ENCODE measurements at regions of chr11 and their contacts with region 1.

Region 1: DNA sequence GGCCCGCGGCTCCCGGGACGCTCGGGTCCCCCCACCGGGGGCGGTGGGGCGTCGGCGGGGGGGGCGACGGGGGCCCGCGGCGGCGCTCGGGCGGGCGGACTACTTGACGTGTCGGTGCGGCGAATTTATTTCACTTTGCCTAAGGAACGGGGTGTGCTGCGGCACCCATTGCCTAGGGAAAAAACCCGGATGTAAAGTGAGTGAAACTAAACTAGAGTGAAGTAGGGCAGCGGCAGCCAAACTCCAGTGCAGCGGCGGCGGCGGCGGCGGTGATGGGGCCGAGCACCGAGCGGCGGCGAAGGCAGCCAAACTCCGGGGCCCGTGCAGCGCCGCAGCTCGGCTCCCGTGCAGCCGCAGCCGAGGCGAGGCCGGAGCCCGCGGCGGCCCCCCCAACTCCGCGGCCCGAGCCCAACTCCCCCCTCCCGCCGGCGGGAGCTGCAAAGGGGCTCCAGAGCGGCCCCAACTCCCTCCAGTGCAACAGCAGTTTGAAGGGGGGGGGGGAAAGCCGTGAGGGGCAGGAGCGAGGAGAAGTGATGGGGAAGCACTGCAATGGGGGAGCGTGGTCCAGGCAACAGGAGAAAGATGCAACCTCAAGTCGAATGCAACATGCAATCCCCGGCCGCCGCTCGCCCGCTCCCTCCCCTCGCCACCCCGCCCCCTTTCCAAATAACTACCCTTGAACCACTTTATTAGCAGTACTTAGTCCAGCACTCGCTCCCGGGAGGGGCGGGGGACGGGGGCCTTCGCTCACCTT is 647 bp upstream of the PHF21A start:
- DNase-seq: peak; percentile 76
- H3K4me3 Mint-ChIP-seq: peak overlapping the region; percentile 86
- H3K27ac Mint-ChIP-seq: peak overlapping the region; percentile 91
- H3K4me1 Mint-ChIP-seq: peaks cover 40% of the 10 kb centered on the region
- H3K27me3 Mint-ChIP-seq: no peaks in the 10 kb centered on the region

Region 2: DNA sequence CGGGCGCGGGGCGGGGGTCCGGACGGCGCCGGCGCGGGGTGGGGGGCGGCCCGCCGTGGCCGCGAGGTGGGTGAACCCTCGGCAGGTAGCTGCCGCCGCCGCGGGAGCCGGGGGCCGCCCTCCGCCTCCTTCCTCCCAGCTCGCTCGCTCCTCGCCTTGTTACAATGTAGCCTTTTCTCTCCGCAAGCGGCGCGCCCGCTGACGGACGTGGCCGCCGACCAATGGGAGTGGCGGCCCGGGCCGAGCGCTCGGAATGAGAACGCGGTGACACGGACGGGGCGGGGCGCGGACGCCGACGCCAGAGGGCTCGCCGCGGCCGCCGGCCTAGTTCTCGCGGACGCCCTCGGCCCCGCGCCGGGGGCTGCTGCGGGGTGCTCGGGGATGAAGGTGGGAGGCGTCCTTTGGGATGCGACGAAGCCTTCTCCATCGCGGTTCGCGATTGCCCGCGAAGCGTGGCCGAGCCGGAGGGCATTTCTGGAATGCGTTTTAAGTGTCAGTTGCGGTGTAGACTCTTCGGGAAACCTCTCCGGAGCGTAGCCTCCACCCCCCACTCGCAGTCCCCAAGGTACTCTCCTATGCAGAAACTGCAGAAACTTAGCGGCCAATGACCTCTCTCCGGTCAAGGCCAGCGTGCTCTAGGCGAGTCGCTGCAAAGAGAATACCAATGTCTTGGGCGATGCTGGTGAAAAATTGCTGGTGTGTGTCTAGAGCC is 974.7 kb before region 1 on chr11:
- intact Hi-C with region 1: loop called (anchors 10 kb)
- DNase-seq: peak; percentile 91
- H3K4me3 Mint-ChIP-seq: peak overlapping the region; percentile 81
- H3K27ac Mint-ChIP-seq: peak overlapping the region; percentile 83
- H3K4me1 Mint-ChIP-seq: peaks cover 13% of the 10 kb centered on the region
- H3K27me3 Mint-ChIP-seq: peaks cover 35% of the 10 kb centered on the region

Region 3: GRCh38 chr11:45713573-45713972 is 408.3 kb before region 1 on chr11:
- intact Hi-C with region 1: no loop called
- DNase-seq: no peak
- H3K4me3 Mint-ChIP-seq: no peak overlapping the region
- H3K27ac Mint-ChIP-seq: no peak overlapping the region
- H3K4me1 Mint-ChIP-seq: no peaks in the 10 kb centered on the region
- H3K27me3 Mint-ChIP-seq: peaks cover 14% of the 10 kb centered on the region

Region 4: DNA sequence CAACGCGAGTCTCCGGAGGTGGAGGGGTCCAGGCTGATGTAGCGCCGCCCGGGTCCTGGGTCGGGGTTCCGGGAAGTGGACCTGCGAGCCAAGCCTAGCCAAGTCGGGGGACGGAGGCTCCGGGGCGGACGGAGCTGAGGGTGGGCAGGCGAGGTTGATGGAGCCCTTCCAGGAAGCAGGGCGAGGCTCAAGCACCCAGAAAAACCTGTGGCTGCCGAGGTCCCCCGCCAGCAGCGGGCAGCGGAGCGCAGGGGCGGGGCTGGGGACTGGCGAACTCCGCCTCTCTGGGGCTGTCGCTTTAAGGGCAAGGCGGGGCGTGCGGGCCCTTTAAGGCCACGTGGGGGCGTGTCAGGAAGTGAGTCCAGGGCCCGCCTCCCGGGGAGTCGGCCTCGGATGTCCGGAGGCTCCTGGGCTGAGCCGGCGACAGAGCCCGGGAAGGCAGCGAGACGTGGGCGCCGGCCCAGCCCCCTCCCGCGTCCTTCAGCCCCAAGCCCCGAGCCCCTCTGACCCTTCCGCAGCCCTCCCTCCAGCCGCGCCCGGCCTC is 317.1 kb before region 1 on chr11 and contains the start of gene SLC35C1:
- intact Hi-C with region 1: loop called (anchors 10 kb)
- DNase-seq: peak; percentile 96
- H3K4me3 Mint-ChIP-seq: peak within 1 kb of the TSS; percentile 97
- H3K27ac Mint-ChIP-seq: peak within 1 kb of the TSS; percentile 92
- H3K4me1 Mint-ChIP-seq: peaks cover 38% of the 10 kb centered on the region
- H3K27me3 Mint-ChIP-seq: no peaks in the 10 kb centered on the region
- total RNA-seq, gene SLC35C1: 16.3 and 18.2 TPM in 2 replicates

Region 5: DNA sequence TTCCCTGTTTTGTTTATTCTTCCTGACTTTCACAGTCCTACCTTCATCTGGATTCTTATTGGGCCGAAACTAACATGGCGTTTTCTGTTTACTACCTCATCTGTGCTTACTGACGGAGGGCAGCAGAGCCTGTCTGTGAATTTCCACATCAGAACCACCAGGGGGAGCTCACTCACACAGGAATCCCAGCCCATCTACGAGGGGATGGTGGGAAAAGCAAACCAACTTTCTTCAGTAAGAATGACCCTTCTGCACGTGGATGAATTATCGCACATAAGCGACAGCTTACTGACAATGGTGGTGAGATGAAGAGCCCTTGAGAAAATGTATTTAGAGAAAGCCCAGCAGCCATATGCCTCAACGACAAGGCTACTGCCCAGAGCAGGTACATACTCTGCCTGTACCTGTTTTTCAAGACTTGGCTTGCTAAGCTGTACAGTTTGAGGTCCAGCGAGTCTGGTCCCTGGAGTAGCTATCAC is 157.0 kb before region 1 on chr11:
- intact Hi-C with region 1: loop called (anchors 5 kb)
- DNase-seq: peak; percentile 38
- H3K4me3 Mint-ChIP-seq: no peak overlapping the region
- H3K27ac Mint-ChIP-seq: no peak overlapping the region
- H3K4me1 Mint-ChIP-seq: no peaks in the 10 kb centered on the region
- H3K27me3 Mint-ChIP-seq: no peaks in the 10 kb centered on the region

Region 6: DNA sequence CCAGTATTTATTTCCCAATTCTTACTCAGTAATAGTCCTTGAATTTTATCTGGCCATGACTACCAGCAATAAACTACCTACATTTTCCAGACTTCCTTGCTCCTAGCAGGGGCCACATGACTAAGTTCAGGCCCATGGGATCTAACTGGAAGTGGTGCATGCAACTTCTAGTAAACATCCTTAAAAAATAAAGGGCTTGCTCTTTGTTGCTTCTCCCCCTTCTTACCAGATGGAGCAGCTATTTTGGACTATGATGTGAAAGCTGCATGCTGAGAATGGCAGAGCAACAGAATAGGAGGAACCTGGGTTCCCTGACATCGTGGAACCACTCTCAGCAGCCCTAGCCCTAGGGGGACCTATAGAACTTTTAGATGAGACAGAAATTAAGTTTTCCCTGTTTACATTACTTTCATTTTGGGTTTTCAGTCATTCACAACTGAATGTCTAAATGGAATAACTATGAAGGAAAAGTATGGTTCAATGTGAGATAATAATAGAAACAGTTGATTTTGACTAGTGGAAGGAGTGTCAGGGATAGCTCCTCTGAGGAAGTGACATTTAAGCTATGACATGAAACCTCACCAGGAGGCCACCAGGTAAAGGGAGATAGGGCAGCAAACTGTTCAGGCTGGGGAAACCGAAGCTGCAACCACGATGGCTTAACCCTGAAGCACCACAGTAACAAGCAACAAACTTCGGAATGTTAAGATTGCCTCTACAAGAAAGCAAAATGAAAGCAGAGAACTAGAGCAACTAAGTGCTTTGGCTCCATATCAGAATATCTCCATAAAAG is 49.5 kb before region 1 on chr11:
- intact Hi-C with region 1: loop called (anchors 5 kb)
- DNase-seq: no peak
- H3K4me3 Mint-ChIP-seq: no peak overlapping the region
- H3K27ac Mint-ChIP-seq: no peak overlapping the region
- H3K4me1 Mint-ChIP-seq: peaks cover 10% of the 10 kb centered on the region
- H3K27me3 Mint-ChIP-seq: no peaks in the 10 kb centered on the region

Region 7: DNA sequence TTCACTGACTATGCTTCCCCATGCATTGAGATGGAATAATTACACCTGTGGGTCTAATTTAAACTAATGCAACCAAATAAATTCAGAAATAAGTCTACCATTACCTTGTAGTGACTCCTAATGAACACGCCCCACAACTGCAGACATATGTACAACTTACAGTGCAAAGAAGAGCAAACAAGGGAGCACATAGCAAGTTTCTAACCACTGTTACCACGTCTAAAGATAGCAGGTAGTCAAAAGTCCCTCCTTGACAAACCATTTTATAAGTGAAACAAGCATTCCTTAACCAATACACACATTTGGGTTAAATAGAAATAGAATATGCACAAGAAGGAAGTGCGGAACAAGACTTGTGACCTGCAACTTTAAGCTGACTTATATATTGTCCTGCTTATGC is 21.2 kb before region 1 on chr11:
- intact Hi-C with region 1: loop called (anchors 2 kb)
- DNase-seq: no peak
- H3K4me3 Mint-ChIP-seq: peak overlapping the region; percentile 52
- H3K27ac Mint-ChIP-seq: peak overlapping the region; percentile 0
- H3K4me1 Mint-ChIP-seq: peaks cover 30% of the 10 kb centered on the region
- H3K27me3 Mint-ChIP-seq: no peaks in the 10 kb centered on the region

Region 8: DNA sequence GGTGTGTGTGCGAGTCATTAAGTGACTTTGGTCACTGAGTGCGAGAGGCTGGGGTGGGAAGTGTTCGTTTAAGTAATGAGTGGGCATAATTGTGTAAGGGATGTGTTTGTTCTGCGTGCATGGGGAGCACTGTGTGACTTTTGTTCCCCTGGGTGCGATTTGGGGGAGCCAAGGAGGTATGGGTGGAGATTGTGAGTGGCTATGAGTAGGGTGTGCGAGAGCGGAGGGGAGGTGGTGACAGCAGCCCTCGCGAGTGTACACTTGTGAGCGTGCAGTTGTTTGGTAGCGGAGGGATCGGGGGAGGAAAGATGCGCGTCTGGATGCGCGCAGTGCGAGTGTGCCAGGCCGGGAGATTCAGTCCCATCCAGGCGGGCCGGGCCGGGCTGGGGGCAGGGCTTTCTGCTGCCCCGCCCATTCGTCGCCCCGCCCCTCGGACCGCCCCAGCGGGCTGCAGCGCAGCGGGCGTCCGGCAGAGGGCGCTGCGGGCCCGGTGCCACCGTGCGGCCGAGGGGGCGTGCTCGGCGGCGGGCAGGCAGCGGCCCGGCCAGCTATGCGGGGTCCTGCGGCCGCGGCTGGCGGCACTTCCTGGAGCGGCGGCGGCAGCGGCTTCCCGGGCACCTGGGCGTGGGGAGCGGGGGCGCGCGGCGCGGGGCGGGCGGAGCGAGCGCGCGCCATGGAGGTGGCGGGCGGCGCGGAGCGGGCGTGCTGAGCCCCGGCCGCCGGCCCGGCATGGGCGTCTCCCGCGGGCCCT is 225.2 kb after region 1 on chr11 and contains the start of gene DGKZ:
- intact Hi-C with region 1: loop called (anchors 2 kb)
- DNase-seq: peak; percentile 91
- H3K4me3 Mint-ChIP-seq: peak within 1 kb of the TSS; percentile 88
- H3K27ac Mint-ChIP-seq: peak within 1 kb of the TSS; percentile 89
- H3K4me1 Mint-ChIP-seq: peaks cover 72% of the 10 kb centered on the region
- H3K27me3 Mint-ChIP-seq: peaks cover 3% of the 10 kb centered on the region
- total RNA-seq, gene DGKZ: 101 TPM in 2 replicates

Region 9: GRCh38 chr11:46729110-46730027 is 607.5 kb after region 1 on chr11:
- intact Hi-C with region 1: no loop called
- DNase-seq: no peak
- H3K4me3 Mint-ChIP-seq: no peak overlapping the region
- H3K27ac Mint-ChIP-seq: no peak overlapping the region
- H3K4me1 Mint-ChIP-seq: no peaks in the 10 kb centered on the region
- H3K27me3 Mint-ChIP-seq: no peaks in the 10 kb centered on the region

Measured in activated T-helper 1 cell treated with anti-CD3 and anti-CD28 coated beads, Interleukin-12 subunit alpha, Interleukin-12 subunit beta, Interleukin-2, Interleukin-4 antibody, amounts not matched to agents 30 ng/mL and 10 ng/mL and 1 ng/mL, durations not matched to agents 14 hours and 24 hours and 36 hours (primary cell).